B cell (primary cell): ENCODE measurements at regions of chr17 and their contacts with region 1.

Region 1: DNA sequence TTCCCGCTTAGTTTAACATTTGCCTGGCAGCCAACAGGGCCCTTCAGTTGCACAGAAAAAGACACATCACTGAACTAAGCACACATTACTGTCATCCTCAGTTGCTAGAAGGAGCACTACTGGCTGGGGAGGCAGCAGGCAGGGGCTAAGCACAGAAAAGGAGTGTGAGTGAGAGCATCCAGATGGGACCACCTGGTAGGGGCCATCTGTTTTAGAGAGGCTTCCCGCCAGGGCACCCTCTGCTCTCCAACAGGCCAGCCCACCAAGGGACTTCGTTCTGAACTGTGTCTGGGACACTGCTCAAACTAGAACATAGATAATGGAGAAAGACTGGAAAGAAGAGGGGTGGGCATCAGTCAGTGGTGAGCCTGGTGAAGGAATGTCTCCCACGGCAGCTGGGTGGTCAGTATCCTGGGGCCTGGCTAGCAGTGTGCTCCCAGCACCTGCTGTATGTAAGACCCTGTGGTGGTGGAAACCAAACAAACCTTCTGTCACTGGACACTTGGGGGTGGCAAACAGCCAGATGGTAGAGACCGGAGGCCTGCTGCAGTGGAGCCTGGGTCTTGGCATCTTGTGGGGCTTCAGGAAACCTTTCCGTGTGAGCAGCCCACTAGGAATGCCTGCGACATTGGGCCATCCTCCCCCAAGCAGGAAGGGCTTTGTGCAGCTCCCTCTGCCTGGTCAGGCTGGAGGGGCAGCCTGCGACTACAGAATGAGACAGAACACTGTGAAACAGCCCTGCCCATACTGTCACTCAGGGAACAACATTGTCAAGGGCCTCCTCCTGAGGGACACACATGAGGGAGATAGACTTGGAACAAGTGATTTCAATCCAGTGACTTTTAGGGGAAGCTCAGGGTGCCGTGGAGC is 12.8 kb upstream of the RANGRF start:
- DNase-seq: no peak
- ATAC-seq: no peak
- H3K4me3 ChIP-seq: no peak overlapping the region
- H3K4me3 Mint-ChIP-seq: no peak overlapping the region
- H3K27ac ChIP-seq: no peak overlapping the region
- H3K27ac Mint-ChIP-seq: no peak overlapping the region
- H3K4me1 ChIP-seq: no peaks in the 10 kb centered on the region
- H3K4me1 Mint-ChIP-seq: no peaks in the 10 kb centered on the region
- H3K27me3 ChIP-seq: no peaks in the 10 kb centered on the region
- H3K27me3 Mint-ChIP-seq: no peaks in the 10 kb centered on the region
- CTCF ChIP-seq: no peak

Region 2: DNA sequence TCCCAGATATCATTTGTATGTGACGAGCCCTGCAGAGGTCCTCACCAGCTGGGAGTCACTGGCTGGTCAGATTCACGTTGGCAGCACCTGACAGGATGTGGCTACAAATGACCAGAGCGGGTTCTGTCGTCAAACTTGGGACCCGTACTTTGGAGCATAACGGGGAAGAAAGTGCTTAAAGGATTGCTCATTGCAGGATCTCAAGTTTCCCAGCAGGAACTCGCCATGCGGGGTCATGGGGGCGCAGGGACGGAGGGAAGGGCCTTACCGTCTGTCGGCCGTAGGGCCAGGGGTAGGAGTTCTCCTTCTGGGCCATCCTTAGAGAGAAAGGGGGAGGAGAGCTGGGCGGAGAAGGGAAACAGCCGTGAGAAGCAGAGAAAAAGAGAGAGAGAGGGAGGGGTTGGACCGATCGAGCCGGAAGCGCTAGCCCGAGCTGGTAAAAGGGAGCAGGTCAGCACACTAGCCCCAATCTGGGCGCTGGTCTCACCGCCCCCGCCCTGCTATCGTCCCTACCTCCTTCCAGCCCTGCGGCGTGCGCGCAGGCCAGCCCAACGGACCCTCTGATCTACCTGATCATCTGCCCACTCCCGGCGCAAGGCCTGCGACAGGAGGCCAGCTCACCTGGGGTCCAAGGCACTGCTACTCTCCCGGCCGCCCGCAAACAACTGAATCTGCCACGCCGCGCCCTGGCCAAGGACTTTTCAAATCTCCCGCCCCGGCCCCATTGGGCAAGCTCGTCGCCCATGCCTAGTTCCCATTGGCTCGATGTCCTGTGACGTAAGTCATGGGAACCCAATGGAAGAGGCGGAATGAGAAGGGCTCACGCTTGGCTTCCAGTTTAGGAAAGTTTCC is 65.5 kb before region 1 on chr17 and contains the start of gene AURKB:
- CTCF ChIA-PET with region 1: no interaction called
- POLR2A ChIA-PET with region 1: interaction called, 11 read pairs
- intact Hi-C with region 1: no loop called
- DNase-seq: peak; percentile 94
- ATAC-seq: peak; percentile 100
- H3K4me3 ChIP-seq: peak within 1 kb of the TSS; percentile 65 to 95 (median 76)
- H3K4me3 Mint-ChIP-seq: peak within 1 kb of the TSS; percentile 86
- H3K27ac ChIP-seq: peak within 1 kb of the TSS; percentile 59 to 66
- H3K27ac Mint-ChIP-seq: peak within 1 kb of the TSS; percentile 39
- H3K4me1 ChIP-seq: peaks cover 9 to 22% of the 10 kb centered on the region in 2 donors
- H3K4me1 Mint-ChIP-seq: peaks cover 15% of the 10 kb centered on the region
- H3K27me3 ChIP-seq: no peaks in the 10 kb centered on the region
- H3K27me3 Mint-ChIP-seq: no peaks in the 10 kb centered on the region
- CTCF ChIP-seq: no peak
- total RNA-seq, gene AURKB: 0.41 and 1.1 TPM in 2 replicates

Region 3: DNA sequence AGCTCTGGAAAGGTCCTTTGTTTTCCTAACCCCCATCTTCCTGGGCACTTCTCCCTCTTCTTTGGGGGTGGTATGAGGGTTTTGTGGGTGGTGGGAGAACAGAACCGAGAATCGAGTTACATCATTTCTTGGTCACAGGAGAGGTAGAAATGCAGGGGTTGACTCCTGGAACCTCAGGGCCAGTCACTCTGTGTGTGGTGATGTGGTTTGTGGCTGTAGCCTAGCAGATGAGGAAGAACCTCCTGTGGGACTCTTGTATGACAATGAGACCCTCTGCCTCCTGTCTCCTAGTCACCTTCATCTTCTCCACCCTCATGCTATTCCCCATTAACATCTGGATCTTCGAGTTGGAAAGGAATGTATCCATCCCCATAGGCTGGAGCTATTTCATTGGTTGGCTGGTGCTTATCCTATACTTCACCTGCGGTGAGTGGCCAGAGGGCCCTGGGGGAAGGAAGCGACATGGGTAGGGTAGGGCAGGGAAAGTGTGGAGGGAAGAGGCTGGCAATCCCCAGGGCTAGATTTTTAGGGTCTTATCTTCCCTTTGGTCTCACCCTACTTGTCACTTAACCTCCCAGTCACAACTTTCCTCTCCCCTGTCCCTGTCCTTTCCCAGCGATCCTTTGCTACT is 69.5 kb after region 1 on chr17:
- CTCF ChIA-PET with region 1: no interaction called
- POLR2A ChIA-PET with region 1: no interaction called
- intact Hi-C with region 1: no loop called
- DNase-seq: no peak
- ATAC-seq: no peak
- H3K4me3 ChIP-seq: no peak overlapping the region
- H3K4me3 Mint-ChIP-seq: no peak overlapping the region
- H3K27ac ChIP-seq: no peak overlapping the region
- H3K27ac Mint-ChIP-seq: no peak overlapping the region
- H3K4me1 ChIP-seq: no peaks in the 10 kb centered on the region
- H3K4me1 Mint-ChIP-seq: no peaks in the 10 kb centered on the region
- H3K27me3 ChIP-seq: peaks cover 0 to 5% (median 2%) of the 10 kb centered on the region in 4 experiments
- H3K27me3 Mint-ChIP-seq: peaks cover 22% of the 10 kb centered on the region
- CTCF ChIP-seq: no peak